ENCODE measurements at regions of chr22 and their contacts with region 1.

Region 1: GRCh38 chr22:40289991-40290459 is 56.3 kb upstream of the ADSL start:
- DNase-seq: no peak
- ATAC-seq: peak in 1 of 2 donors; percentile 34
- H3K4me3 ChIP-seq: no peak overlapping the region
- H3K27ac ChIP-seq: peak overlapping the region in 1 of 4 donors; percentile 14
- H3K4me1 ChIP-seq: no peaks in the 10 kb centered on the region
- H3K27me3 ChIP-seq: no peaks in the 10 kb centered on the region
- CTCF ChIP-seq: no peak
- POLR2A ChIP-seq: no peak

Region 2: GRCh38 chr22:40055143-40055883 is 234.7 kb before region 1 on chr22:
- in situ Hi-C with region 1: loop called in 1 of 4 experiments (anchors 25 kb)
- intact Hi-C with region 1: no loop called
- DNase-seq: no peak
- ATAC-seq: no peak
- H3K4me3 ChIP-seq: no peak overlapping the region
- H3K27ac ChIP-seq: no peak overlapping the region
- H3K4me1 ChIP-seq: peaks cover 57 to 59% of the 10 kb centered on the region in 2 donors
- H3K27me3 ChIP-seq: no peaks in the 10 kb centered on the region
- CTCF ChIP-seq: no peak
- POLR2A ChIP-seq: no peak

Region 3: DNA sequence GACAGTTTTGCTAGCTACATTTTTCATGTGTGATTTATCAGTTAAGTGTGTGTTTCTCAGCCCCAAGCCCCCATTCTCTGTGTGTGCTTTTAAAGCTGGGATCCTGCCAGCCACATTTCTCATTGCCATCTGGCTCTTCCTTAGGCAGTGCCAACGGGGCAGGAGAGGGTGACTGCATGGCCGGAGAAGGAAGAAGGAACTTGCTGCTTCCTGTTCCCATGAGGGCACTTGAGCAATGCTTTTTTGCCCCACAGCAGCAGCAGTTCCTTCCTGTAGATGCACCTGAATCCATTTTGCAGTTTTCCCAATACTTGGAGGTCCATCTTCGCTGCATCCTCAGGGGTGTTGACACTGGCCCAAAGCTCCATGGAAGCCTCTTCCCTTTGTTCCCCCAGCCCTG is 74.8 kb before region 1 on chr22:
- in situ Hi-C with region 1: no loop called
- intact Hi-C with region 1: no loop called
- DNase-seq: peak; percentile 20 to 40
- ATAC-seq: no peak
- H3K4me3 ChIP-seq: no peak overlapping the region
- H3K27ac ChIP-seq: peak overlapping the region; percentile 3 to 44 (median 13)
- H3K4me1 ChIP-seq: peaks cover 76 to 82% of the 10 kb centered on the region in 2 donors
- H3K27me3 ChIP-seq: no peaks in the 10 kb centered on the region
- CTCF ChIP-seq: no peak
- POLR2A ChIP-seq: no peak

Region 4: DNA sequence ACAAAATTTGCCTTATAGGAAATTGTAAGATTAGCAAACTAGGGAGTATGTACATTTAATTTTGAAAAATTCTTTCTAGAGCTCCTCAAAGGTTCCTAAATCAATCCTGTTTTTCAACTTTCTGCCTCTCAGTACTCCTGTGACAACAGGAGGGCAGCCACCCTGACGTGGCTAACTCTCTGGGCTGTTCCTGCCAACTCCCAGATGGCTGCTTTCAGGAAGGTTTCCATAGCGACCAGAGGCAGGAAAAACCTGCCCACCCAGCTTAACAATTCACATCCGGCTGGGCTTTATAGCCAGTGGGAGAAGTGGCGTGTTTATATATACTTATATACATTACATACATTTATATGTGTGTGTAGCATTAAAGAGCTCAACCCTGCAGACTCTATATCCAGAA is 106.9 kb after region 1 on chr22:
- in situ Hi-C with region 1: no loop called
- intact Hi-C with region 1: no loop called
- DNase-seq: no peak
- ATAC-seq: peak; percentile 25 to 37
- H3K4me3 ChIP-seq: no peak overlapping the region
- H3K27ac ChIP-seq: peak overlapping the region in 1 of 4 donors; percentile 58
- H3K4me1 ChIP-seq: peaks cover 12 to 16% of the 10 kb centered on the region in 2 donors
- H3K27me3 ChIP-seq: no peaks in the 10 kb centered on the region
- CTCF ChIP-seq: no peak
- POLR2A ChIP-seq: no peak

Measured in gastrocnemius medialis (tissue), 4 donors.